WTC11 (cell line): ENCODE measurements at regions of chr19 and their contacts with region 1.

Region 1: DNA sequence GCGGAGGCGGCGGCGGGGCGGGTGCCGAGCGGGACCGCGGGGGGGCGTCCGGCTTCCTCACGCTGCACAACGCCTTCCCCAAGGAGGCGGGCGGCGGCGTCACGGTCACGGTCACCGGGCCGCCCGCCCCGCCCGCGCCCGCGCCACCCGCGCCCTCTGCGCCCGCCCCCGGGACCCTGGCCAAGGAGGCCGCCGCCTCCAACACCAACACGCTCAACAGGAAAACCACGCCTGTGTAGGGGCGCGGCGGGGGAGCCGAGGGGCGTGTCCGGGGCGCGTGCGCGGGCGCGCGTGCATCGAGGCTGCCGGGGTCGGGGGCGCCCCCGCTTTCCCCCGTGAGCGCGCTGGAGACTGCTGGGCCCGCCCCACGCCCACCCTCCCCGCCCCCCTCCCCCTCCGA is 8.8 kb upstream of the CACNG6 start:
- DNase-seq: peak; percentile 62
- ATAC-seq: no peak
- H3K4me3 Mint-ChIP-seq: no peak overlapping the region
- H3K27ac Mint-ChIP-seq: no peak overlapping the region
- H3K4me1 Mint-ChIP-seq: peaks cover 11% of the 10 kb centered on the region
- H3K27me3 Mint-ChIP-seq: peaks cover 4% of the 10 kb centered on the region; the same call in 1 of the 2 replicates
- CTCF ChIP-seq: no peak

Region 2: DNA sequence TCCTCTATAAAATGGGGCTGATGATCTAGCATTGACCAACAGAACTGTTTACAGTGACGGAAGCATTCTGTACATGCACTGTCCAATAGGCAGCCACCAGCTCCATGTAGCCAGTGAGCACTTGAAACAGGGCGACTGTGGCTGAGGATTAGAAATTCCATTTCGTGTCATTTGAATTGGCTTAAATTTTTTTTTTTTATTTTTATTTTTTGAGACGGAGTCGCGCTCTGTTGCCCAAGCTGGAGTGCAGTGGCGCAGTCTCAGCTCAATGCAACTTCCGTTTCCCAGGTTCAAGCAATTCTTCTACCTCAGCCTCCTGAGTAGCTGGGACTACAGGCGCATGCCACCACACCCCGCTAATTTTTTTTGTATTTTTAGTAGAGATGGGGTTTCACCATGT is 97.6 kb before region 1 on chr19:
- CTCF ChIA-PET with region 1: no interaction called
- POLR2A ChIA-PET with region 1: no interaction called
- DNase-seq: no peak
- ATAC-seq: no peak
- H3K4me3 Mint-ChIP-seq: no peak overlapping the region
- H3K27ac Mint-ChIP-seq: no peak overlapping the region
- H3K4me1 Mint-ChIP-seq: peaks cover 16% of the 10 kb centered on the region
- H3K27me3 Mint-ChIP-seq: peaks cover 14% of the 10 kb centered on the region
- CTCF ChIP-seq: no peak

Region 3: GRCh38 chr19:53898636-53899341 is 83.8 kb before region 1 on chr19:
- CTCF ChIA-PET with region 1: interaction called, 5 read pairs
- POLR2A ChIA-PET with region 1: interaction called, 10 read pairs
- DNase-seq: peak; percentile 100
- ATAC-seq: peak; percentile 92
- H3K4me3 Mint-ChIP-seq: peak overlapping the region; percentile 81
- H3K27ac Mint-ChIP-seq: peak overlapping the region; percentile 100
- H3K4me1 Mint-ChIP-seq: peaks cover 33% of the 10 kb centered on the region
- H3K27me3 Mint-ChIP-seq: 0 out of 2 replicates have a peak, but pooled peaks cover 9% of the 10 kb centered on the region
- CTCF ChIP-seq: no peak

Region 4: DNA sequence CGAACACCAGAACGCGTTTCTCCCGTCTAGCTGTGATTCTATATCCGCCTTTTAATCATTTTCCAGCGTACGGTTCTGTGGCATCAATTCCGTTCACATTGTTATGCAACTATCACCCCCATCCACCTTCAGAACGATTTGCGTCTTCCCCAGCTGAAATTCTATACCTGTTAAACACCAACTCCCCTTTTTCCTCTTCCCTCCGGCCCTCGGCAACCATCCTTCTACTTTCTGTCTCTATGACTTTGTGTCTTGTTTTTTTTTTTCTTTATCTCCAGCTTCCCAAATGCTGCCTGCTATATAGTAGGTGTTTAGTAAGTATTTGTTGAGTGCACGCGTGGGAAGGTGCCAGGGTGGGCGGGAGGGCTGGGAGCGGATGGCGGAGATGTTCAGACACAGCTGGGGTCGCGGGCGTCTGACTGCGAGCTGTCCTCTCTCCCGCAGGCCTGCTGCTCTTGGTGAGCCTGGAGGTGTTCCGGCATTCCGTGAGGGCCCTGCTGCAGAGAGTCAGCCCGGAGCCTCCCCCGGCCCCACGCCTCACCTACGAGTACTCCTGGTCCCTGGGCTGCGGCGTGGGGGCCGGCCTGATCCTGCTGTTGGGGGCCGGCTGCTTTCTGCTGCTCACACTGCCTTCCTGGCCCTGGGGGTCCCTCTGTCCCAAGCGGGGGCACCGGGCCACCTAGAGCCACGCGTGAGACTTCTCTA is 29.0 kb after region 1 on chr19:
- CTCF ChIA-PET with region 1: interaction called, 14 read pairs
- POLR2A ChIA-PET with region 1: interaction called, 6 read pairs
- DNase-seq: peak; percentile 68
- ATAC-seq: peak; percentile 91
- H3K4me3 Mint-ChIP-seq: peak overlapping the region; percentile 50
- H3K27ac Mint-ChIP-seq: peak overlapping the region; percentile 66
- H3K4me1 Mint-ChIP-seq: peaks cover 27% of the 10 kb centered on the region
- H3K27me3 Mint-ChIP-seq: peaks cover 15% of the 10 kb centered on the region
- CTCF ChIP-seq: no peak